Activated CD4-positive, alpha-beta T cell treated with anti-CD3 and anti-CD28 coated beads for 36 hours (primary cell): ENCODE measurements at regions of chr17 and their contacts with region 1.

Region 1: DNA sequence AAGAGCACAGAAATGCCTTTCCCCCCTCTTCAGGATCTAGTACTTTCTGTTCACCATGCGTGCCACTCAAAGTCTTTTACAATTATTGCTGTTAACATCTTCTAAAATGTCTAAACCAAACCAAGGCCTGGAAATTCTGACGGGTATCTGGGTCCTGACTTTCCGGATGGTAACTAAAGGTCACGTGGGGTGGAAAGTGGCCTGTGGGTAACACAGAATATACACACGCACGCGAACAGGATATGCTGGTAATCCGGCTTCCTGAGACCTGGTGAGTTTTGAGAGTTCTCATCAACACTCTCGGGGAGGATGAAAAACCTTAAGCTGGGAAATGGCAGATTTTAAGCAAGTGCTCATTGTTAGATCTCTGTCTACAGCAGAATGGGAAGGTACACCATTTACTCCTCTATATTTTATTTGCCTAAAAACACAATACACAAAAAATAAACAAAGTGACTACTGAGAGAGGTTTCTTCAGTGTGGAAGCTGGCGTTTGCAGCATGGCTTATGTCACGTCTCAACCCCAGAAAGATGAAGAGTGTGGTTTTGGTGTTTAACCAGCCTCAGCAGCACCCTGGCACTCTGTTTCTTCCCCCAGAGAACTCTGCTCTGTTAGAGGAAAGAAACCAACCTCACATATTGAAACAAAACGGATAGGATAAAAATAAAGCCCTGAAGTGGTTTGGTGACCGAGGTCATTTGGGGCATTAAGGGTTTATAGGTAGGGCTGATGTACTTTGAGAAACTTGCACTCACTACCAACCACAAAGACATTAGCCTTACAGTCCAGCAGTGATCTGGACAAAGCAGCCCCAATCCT is 37.3 kb downstream of the SMG6 start:
- DNase-seq: peak; percentile 93
- ATAC-seq: peak; percentile 76
- H3K4me3 Mint-ChIP-seq: peak overlapping the region; percentile 72
- H3K27ac Mint-ChIP-seq: peak overlapping the region; percentile 98
- H3K4me1 Mint-ChIP-seq: peaks cover 86% of the 10 kb centered on the region
- H3K27me3 Mint-ChIP-seq: no peaks in the 10 kb centered on the region

Region 2: DNA sequence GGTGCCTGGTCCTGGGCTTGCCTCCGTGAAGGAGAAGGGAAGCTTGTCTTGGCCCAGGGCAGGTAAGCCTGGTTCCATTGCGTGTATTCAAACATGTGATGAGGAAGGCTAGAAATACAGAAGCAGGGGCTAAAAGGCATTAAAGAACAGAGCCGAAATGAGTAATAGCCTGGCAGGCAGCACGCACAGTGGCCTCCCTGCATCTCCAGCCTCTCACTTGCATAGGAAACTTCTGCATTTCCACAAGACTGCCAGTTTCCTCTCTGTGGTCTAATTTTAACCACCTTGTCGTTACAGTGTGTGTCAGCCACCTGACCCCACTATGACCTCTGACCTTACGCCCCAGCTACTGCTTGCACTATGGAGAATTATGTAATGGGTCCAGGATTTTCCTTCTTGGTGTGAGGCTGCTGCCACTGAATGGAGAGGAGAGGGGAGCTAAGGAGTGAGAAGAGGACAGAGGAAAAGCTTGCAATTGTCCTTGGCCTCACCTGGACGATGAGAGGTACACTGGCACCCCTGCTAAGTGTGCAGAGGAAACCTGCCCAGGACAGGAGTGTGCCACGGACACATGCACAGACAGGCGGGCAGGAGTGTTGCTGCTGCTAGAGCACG is 178.6 kb before region 1 on chr17:
- CTCF ChIA-PET with region 1: interaction called, 3 read pairs
- POLR2A ChIA-PET with region 1: interaction called, 3 read pairs
- intact Hi-C with region 1: loop called in 1 of 2 experiments (anchors 1 kb)
- DNase-seq: peak; percentile 78
- ATAC-seq: peak; percentile 62
- H3K4me3 Mint-ChIP-seq: peak overlapping the region; percentile 7
- H3K27ac Mint-ChIP-seq: peak overlapping the region; percentile 2
- H3K4me1 Mint-ChIP-seq: peaks cover 69% of the 10 kb centered on the region
- H3K27me3 Mint-ChIP-seq: no peaks in the 10 kb centered on the region

Region 3: GRCh38 chr17:2282297-2282873 is 16.1 kb after region 1 on chr17:
- CTCF ChIA-PET with region 1: interaction called, 7 read pairs
- POLR2A ChIA-PET with region 1: no interaction called
- intact Hi-C with region 1: loop called in 1 of 2 experiments (anchors 2 kb)
- DNase-seq: no peak
- ATAC-seq: peak; percentile 80
- H3K4me3 Mint-ChIP-seq: no peak overlapping the region
- H3K27ac Mint-ChIP-seq: peak overlapping the region; percentile 58
- H3K4me1 Mint-ChIP-seq: peaks cover 31% of the 10 kb centered on the region
- H3K27me3 Mint-ChIP-seq: no peaks in the 10 kb centered on the region

Region 4: DNA sequence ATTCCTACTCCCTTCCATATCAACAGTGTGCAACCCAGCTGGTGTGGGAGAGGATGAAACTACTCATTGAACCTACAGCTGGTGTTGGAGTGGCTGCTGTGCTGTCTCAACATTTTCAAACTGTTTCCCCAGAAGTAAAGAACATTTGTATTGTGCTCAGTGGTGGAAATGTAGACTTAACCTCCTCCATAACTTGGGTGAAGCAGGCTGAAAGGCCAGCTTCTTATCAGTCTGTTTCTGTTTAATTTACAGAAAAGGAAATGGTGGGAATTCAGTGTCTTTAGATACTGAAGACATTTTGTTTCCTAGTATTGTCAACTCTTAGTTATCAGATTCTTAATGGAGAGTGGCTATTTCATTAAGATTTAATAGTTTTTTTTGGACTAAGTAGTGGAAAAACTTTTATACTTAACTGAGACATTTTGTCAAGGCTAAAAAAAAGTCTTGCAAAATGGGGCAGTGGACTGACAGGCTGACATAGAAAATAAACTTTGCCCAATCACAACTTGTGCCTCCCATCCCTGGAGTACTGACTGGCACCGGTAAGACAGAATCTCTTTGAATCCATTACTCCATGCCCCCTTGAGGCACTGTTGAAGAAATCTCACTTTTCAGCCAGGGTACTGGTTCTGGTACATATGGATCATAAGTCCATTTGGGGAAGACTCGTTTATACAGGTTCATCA is 57.5 kb after region 1 on chr17:
- CTCF ChIA-PET with region 1: no interaction called
- POLR2A ChIA-PET with region 1: no interaction called
- intact Hi-C with region 1: no loop called
- DNase-seq: no peak
- ATAC-seq: no peak
- H3K4me3 Mint-ChIP-seq: no peak overlapping the region
- H3K27ac Mint-ChIP-seq: no peak overlapping the region
- H3K4me1 Mint-ChIP-seq: no peaks in the 10 kb centered on the region
- H3K27me3 Mint-ChIP-seq: no peaks in the 10 kb centered on the region